Heart right ventricle (tissue), 16 donors: ENCODE measurements at regions of chr17 and their contacts with region 1.

Region 1: GRCh38 chr17:61338000-61338798 is 61.4 kb upstream of the TBX2 start:
- DNase-seq: peak in 1 of 2 donors; percentile 36
- ATAC-seq: peak in 6 of 8 donors; percentile 37 to 71 (median 49)
- H3K4me3 ChIP-seq: no peak overlapping the region
- H3K27ac ChIP-seq: peak overlapping the region in 8 of 10 donors; percentile 2 to 76 (median 36)
- H3K4me1 ChIP-seq: peaks cover 5 to 48% (median 35%) of the 10 kb centered on the region in 9 donors
- H3K27me3 ChIP-seq: peaks cover 0 to 3% (median 0%) of the 10 kb centered on the region in 7 donors
- CTCF ChIP-seq: no peak

Region 2: GRCh38 chr17:61009663-61010062 is 328.5 kb before region 1 on chr17:
- intact Hi-C with region 1: loop called in 1 of 10 experiments (anchors 5 kb)
- DNase-seq: peak in 1 of 2 donors; percentile 34
- ATAC-seq: peak in 5 of 8 donors; percentile 25 to 83 (median 64)
- H3K4me3 ChIP-seq: no peak overlapping the region
- H3K27ac ChIP-seq: peak overlapping the region in 4 of 10 donors; percentile 39 to 65 (median 54)
- H3K4me1 ChIP-seq: peaks cover 0 to 59% (median 38%) of the 10 kb centered on the region in 9 donors
- H3K27me3 ChIP-seq: no peaks in the 10 kb centered on the region
- CTCF ChIP-seq: no peak

Region 3: GRCh38 chr17:61097781-61098180 is 240.4 kb before region 1 on chr17:
- intact Hi-C with region 1: no loop called
- DNase-seq: no peak
- ATAC-seq: no peak
- H3K4me3 ChIP-seq: no peak overlapping the region
- H3K27ac ChIP-seq: no peak overlapping the region
- H3K4me1 ChIP-seq: no peaks in the 10 kb centered on the region
- H3K27me3 ChIP-seq: no peaks in the 10 kb centered on the region
- CTCF ChIP-seq: no peak

Region 4: DNA sequence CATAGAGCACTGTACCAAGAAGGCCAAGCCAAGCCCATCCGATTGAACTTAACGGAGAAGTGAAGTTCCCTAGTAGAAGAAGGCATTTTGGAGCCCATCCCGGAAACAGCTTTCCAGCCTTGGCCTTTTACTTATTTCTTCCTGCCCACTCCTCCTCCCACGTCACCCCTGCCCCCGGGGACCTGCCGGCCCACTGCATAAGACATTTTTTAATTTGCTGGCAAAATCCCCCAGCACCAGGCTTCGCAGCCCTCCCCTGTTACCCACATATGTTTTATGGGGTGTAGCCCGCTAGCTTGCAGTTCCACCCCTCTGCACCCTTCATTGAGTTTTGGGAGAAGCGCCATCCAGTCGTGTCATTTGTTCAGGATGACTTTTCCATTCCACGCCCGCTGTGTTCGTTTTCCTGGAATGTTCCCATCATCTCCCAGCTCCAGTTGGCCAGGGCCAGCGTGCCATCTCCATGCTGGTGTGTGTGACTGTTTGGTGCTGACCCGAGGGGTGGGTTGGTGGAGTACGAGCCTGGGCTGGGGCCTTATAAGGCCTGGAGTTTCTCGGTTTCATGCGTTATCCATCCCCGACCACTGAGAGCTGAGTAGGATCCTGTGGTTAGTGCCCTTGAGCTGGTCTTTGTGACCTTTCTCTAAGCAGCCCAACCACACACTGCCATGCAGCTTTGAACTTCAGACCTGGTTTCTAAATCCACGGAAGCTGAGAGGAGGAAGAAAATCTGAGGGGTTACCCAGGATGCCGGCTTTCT is 41.4 kb after region 1 on chr17:
- intact Hi-C with region 1: loop called in 1 of 10 experiments (anchors 5 kb)
- DNase-seq: no peak
- ATAC-seq: peak in 1 of 8 donors; percentile 6
- H3K4me3 ChIP-seq: no peak overlapping the region
- H3K27ac ChIP-seq: peak overlapping the region in 6 of 10 donors; percentile 2 to 61 (median 30)
- H3K4me1 ChIP-seq: peaks cover 0 to 33% (median 6%) of the 10 kb centered on the region in 9 donors
- H3K27me3 ChIP-seq: no peaks in the 10 kb centered on the region
- CTCF ChIP-seq: no peak